Mammary epithelial cell (primary cell): ENCODE measurements at regions of chr19 and their contacts with region 1.

Region 1: DNA sequence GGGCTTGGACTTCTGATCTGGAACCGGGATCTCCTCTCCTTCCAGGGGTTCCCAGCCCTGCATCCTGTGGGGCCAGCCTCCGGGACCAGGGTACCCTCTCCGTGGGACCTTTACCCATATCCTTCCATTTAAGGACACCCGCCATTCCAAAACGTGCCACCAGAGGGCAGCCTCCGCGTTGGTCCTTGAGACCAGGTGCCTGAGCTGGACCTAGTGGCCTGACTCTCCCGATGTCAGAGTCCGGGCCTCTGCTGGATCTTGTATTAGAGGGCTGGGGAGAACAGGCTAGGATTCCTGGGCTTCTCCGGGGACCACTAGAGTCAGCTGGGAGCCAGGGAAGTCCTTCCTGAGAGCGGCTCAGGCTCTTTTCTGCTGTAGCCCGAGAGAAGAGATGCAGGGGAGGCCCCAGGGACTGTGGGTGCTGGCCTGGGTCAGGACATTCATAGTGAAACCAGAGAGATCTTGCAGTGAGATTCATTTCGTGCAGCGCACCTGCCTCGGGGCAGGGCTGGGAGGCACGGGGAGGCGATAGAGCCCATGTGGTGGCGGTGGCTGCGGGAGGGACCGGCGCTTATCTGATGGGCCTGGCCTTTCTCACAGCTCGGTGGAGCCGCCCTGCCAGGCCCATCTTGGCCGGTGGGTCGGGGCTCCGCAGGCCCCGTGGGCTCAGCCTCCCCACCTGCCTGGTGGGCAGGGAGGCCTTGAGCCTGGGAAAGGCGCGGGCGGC is 9.8 kb upstream of the SLC7A10 start:
- DNase-seq: peak; percentile 30
- H3K4me3 ChIP-seq: no peak overlapping the region
- H3K27ac ChIP-seq: no peak overlapping the region
- H3K4me1 ChIP-seq: no peaks in the 10 kb centered on the region
- H3K27me3 ChIP-seq: no peaks in the 10 kb centered on the region
- CTCF ChIP-seq: peak; percentile 81 to 94

Region 2: DNA sequence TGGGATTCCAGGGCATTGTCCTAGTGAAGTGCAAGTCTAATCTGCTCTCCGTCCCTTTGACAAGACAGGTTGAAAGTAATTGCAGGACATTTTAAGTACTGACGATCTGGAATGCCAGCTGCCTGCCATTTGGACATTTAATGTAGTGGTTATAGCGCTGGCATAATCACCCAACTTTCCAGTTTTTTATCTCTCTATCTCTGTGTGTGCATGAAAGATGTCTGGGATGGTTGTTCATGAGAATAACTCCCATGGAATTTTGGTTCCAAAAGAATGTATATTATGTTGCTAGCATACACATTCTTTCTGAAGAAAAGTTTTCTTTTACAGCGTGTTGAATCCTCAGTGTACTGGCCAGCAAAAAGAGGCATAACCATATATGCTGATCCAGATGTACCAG is 462.3 kb before region 1 on chr19:
- CTCF ChIA-PET with region 1: no interaction called
- dilution Hi-C with region 1: no loop called
- in situ Hi-C with region 1: no loop called
- intact Hi-C with region 1: no loop called
- DNase-seq: no peak
- H3K4me3 ChIP-seq: no peak overlapping the region
- H3K27ac ChIP-seq: no peak overlapping the region
- H3K4me1 ChIP-seq: peaks cover 3% of the 10 kb centered on the region
- H3K27me3 ChIP-seq: no peaks in the 10 kb centered on the region
- CTCF ChIP-seq: no peak

Region 3: GRCh38 chr19:33311326-33311682 is 75.9 kb after region 1 on chr19:
- CTCF ChIA-PET with region 1: no interaction called
- dilution Hi-C with region 1: no loop called
- in situ Hi-C with region 1: no loop called
- intact Hi-C with region 1: loop called (anchors 1 kb)
- DNase-seq: no peak
- H3K4me3 ChIP-seq: no peak overlapping the region
- H3K27ac ChIP-seq: no peak overlapping the region
- H3K4me1 ChIP-seq: no peaks in the 10 kb centered on the region
- H3K27me3 ChIP-seq: no peaks in the 10 kb centered on the region
- CTCF ChIP-seq: peak; percentile 31 to 68

Region 4: GRCh38 chr19:33350538-33351309 is 115.3 kb after region 1 on chr19:
- CTCF ChIA-PET with region 1: no interaction called
- dilution Hi-C with region 1: no loop called
- in situ Hi-C with region 1: no loop called
- intact Hi-C with region 1: no loop called
- DNase-seq: peak; percentile 100
- H3K4me3 ChIP-seq: peak overlapping the region in 1 of 3 experiments; percentile 6
- H3K27ac ChIP-seq: peak overlapping the region; percentile 81
- H3K4me1 ChIP-seq: peaks cover 17% of the 10 kb centered on the region
- H3K27me3 ChIP-seq: no peaks in the 10 kb centered on the region
- CTCF ChIP-seq: no peak